ENCODE measurements at regions of chr9 and their contacts with region 1.

Region 1: GRCh38 chr9:7479300-7479699 is 320.3 kb downstream of the DMAC1 start:
- DNase-seq: no peak
- H3K4me3 Mint-ChIP-seq: no peak overlapping the region
- H3K27ac Mint-ChIP-seq: no peak overlapping the region
- H3K4me1 Mint-ChIP-seq: no peaks in the 10 kb centered on the region
- H3K27me3 Mint-ChIP-seq: no peaks in the 10 kb centered on the region
- CTCF ChIP-seq: no peak

Region 2: DNA sequence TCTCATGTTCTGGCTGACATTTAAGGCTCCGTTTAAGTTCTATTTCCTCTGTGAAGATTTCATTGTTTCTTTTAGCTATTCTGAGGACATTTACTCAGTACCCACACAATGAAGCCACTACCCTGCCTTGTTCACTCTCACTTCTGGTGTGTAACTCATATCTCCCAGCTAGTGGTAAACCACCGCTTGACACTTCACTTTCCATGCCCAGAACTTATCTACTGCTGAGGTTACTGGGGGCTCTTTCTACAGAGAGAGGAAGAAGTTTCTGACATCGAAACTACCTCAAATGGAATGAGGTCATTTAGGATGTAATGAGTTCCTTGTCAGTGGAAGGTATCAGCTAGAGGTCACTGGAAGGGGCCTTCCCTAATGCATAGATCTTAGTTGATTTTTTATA is 181.2 kb before region 1 on chr9:
- CTCF ChIA-PET with region 1: no interaction called
- intact Hi-C with region 1: loop called (anchors 10 kb)
- DNase-seq: no peak
- H3K4me3 Mint-ChIP-seq: no peak overlapping the region
- H3K27ac Mint-ChIP-seq: no peak overlapping the region
- H3K4me1 Mint-ChIP-seq: no peaks in the 10 kb centered on the region
- H3K27me3 Mint-ChIP-seq: peaks cover 37% of the 10 kb centered on the region
- CTCF ChIP-seq: no peak

Region 3: GRCh38 chr9:7439355-7439995 is 39.8 kb before region 1 on chr9:
- CTCF ChIA-PET with region 1: no interaction called
- intact Hi-C with region 1: no loop called
- DNase-seq: no peak
- H3K4me3 Mint-ChIP-seq: no peak overlapping the region
- H3K27ac Mint-ChIP-seq: no peak overlapping the region
- H3K4me1 Mint-ChIP-seq: no peaks in the 10 kb centered on the region
- H3K27me3 Mint-ChIP-seq: no peaks in the 10 kb centered on the region
- CTCF ChIP-seq: no peak

Region 4: DNA sequence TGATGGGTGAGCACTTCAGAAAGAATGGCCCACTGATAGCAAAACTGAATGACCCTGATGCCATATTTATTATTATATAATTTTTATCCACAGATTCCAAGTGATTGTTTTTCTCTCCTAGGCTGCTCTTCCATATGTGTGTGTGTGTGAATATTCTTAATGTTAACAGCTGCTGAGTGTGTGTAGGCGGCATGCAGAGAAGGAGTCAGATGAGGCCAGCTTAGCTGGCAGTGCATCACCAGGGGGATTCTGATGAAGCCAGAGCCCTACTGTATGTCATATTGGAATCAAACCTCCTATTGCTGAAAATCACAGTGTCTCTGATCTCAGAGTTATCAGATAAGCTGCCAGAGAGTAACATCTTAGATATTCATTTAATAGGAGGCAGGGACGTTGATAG is 143.2 kb after region 1 on chr9:
- CTCF ChIA-PET with region 1: no interaction called
- intact Hi-C with region 1: loop called (anchors 5 kb)
- DNase-seq: no peak
- H3K4me3 Mint-ChIP-seq: no peak overlapping the region
- H3K27ac Mint-ChIP-seq: no peak overlapping the region
- H3K4me1 Mint-ChIP-seq: no peaks in the 10 kb centered on the region
- H3K27me3 Mint-ChIP-seq: peaks cover 11% of the 10 kb centered on the region
- CTCF ChIP-seq: no peak

Measured in Calu3 (cell line).